AG04449 (cell line): ENCODE measurements at regions of chr12 and their contacts with region 1.

Region 1: GRCh38 chr12:53159195-53159839 is 21.2 kb upstream of the ZNF740 start:
- DNase-seq: no peak
- H3K4me3 ChIP-seq: no peak overlapping the region
- CTCF ChIP-seq: peak; percentile 98

Region 2: DNA sequence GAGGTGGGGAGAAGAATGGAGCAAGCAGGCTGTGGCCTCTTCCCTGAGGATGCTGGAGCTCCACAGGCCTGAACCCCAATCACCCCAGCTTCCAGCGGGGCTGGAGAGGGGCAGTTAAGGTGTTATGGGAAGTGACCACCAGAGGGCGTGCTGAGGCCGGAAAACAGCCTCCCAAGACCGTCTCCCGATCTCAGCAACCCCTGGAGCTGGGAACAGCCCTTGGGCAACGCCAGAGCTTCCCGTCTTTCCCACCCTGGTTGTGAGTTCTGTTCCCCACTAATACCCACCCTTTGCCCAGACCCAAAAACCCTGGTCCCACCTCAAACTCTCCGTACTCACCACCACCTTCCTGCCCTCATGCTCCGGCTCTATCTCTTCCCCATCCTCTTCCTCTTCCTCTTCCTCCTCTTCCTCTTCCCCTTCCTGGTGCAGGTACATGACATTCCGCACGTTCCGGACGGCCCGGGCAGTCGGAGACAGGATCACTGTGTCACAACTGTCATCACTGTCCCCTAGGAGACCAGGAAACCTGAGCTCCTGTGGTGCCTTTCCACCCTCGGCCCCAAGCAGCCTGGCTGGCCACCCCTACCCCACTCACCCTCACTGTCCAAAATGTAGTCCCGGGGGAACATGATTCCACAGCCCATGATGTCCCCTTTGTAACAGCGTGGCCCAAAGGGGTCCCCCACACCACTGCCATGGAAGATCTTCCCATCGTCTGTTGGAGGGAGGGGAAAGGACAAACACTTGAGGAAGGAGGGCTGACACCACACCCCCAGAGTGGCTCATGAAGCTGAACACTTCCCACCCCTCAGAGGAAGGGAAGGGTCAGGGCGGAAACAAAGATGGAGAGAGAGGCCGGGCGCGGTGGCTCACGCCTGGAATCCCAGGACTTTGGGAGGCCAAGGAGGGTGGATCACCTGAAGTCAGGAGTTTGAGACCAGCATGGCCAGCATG is 93.1 kb before region 1 on chr12:
- CTCF ChIA-PET with region 1: interaction called, 73 read pairs
- POLR2A ChIA-PET with region 1: no interaction called
- DNase-seq: no peak
- H3K4me3 ChIP-seq: no peak overlapping the region
- CTCF ChIP-seq: peak; percentile 85

Region 3: DNA sequence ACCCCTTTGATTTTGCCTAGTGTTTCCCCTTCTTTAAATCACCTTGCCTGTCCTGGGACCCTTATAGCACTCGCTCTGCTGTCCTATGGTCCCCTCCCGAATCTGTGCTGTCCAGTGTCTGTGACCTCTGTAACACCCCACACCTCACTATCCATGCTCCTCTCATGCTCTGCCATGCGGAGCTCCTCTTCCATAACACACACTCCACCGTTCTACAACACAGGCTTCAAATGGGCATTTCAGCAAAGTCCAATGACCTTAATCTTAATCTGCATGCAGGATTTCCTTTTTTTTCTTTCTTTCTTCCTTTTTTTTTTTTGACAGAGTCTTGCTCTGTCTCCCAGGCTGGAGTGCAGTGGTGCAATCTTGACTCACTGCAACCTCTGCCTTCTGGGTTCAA is 30.1 kb before region 1 on chr12:
- CTCF ChIA-PET with region 1: interaction called, 18 read pairs
- POLR2A ChIA-PET with region 1: no interaction called
- DNase-seq: no peak
- H3K4me3 ChIP-seq: no peak overlapping the region
- CTCF ChIP-seq: no peak

Region 4: DNA sequence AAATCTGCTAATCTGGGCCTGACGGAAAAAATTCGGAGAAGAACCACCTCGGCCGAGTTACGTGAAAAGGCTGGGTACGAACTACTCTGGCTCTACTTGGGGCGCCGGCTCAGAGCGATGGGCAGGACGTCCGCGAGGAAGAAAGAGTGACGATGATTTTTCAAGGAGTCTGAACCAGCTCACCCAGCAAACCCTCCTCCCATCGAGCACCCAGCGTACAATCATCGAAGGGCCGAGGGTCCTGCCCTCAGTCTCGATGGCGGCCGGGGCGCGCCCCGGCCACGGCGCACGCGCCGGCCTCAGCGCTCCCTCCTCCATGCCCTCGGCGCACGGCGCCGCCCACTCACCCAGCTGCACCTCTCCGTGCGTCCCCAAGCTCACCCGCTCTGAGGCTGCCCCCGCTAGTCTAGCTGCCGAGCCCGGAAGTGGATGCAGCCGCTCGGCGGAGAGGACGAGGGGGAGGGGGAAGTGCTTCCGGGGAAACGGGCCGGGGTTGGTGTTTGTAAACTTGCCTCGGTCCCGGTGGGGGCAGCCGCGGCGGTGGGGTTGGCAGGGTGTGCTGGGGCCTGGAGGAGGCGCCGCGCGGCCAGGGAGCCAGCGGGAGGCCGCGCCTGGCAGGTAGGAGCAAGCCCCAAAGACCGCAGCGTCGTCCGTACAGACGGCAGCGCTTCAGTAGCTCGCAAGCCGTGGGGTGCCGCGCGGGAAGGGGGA is 21.1 kb after region 1 on chr12 and contains the starts of genes CSAD and ZNF740:
- CTCF ChIA-PET with region 1: interaction called, 148 read pairs
- POLR2A ChIA-PET with region 1: interaction called, 8 read pairs
- DNase-seq: peak; percentile 70
- H3K4me3 ChIP-seq: peak within 1 kb of the TSS; percentile 84
- CTCF ChIP-seq: no peak

Region 5: DNA sequence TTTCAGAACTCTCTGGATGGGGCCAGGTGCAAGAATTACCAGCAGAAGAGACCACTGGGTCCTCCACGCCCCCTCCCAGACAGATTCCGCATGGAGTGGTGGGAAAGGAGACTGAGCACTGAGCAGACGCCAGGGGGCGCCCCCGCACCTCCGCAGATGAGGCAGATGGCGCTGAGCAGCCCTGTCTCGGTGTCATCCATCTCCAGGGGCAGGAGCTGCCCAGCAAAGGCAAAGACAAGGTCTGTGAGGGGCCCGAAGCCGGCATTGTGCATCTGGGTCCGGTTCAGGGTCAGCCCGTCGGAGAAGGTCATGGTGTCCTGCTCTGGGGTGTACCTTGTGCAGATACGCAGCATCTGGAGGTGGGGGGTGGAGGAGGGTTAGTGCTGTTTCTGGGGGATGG is 54.0 kb after region 1 on chr12:
- CTCF ChIA-PET with region 1: interaction called, 48 read pairs
- POLR2A ChIA-PET with region 1: no interaction called
- DNase-seq: no peak
- H3K4me3 ChIP-seq: no peak overlapping the region
- CTCF ChIP-seq: peak; percentile 98

Region 6: GRCh38 chr12:53287741-53288216 is 128.5 kb after region 1 on chr12:
- CTCF ChIA-PET with region 1: interaction called, 73 read pairs
- POLR2A ChIA-PET with region 1: no interaction called
- DNase-seq: no peak
- H3K4me3 ChIP-seq: no peak overlapping the region
- CTCF ChIP-seq: peak; percentile 71

Region 7: DNA sequence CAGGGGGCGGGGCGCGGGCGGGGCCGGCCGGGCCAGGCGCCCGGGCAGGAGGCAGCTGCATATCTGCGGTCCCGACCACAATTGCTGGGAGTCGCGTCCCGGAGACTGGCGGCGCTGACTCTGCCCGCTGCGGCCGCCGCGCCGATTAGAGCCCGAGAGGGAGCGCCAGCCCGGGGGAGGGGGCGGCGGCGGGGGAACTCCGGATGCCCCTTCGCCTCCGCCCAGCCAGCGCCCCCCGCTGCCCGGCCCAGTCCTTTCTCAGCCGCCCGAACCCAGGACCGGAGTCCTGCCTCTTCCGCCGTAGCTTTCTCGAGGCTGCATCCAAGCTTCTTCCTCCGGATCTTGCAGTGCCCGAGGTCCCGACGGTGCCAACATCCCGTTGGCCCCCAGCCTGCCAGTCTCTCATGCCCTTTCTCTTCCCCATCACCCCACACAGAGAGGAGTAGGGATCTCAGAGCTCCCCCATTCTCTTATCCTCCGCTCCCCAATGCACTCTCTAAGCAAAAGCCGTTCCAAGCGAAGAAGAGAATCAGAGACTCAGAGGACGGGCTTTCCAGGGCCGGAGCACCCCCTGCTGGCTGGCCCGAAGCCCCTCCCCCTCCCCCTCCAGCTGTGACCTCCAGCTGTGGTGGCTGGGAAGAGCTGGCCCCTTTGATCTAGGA is 185.6 kb after region 1 on chr12:
- CTCF ChIA-PET with region 1: interaction called, 19 read pairs
- POLR2A ChIA-PET with region 1: no interaction called
- DNase-seq: no peak
- H3K4me3 ChIP-seq: peak overlapping the region; percentile 70
- CTCF ChIP-seq: peak; percentile 89